Activated T-helper 2 cell treated with anti-CD3 and anti-CD28 coated beads, Interferon-gamma antibody, Interleukin-2, Interleukin-4, amounts not matched to agents 10 μg/mL and 5 μg/mL and 100 μg/mL, durations not matched to agents 14 hours and 24 hours and 36 hours (primary cell): ENCODE measurements at regions of chr1 and their contacts with region 1.

Region 1: GRCh38 chr1:27603681-27604578 is at the start of gene AHDC1:
- DNase-seq: peak; percentile 87
- H3K4me3 Mint-ChIP-seq: peak within 1 kb of the TSS; percentile 94
- H3K27ac Mint-ChIP-seq: peak within 1 kb of the TSS; percentile 76
- H3K4me1 Mint-ChIP-seq: peaks cover 41% of the 10 kb centered on the region
- H3K27me3 Mint-ChIP-seq: peaks cover 2% of the 10 kb centered on the region
- total RNA-seq, gene AHDC1: 28.5 and 29.3 TPM in 2 replicates

Region 2: GRCh38 chr1:27300341-27301051 is 303.4 kb before region 1 on chr1:
- intact Hi-C with region 1: loop called (anchors 5 kb)
- DNase-seq: peak; percentile 63
- H3K4me3 Mint-ChIP-seq: no peak overlapping the region
- H3K27ac Mint-ChIP-seq: no peak overlapping the region
- H3K4me1 Mint-ChIP-seq: peaks cover 3% of the 10 kb centered on the region
- H3K27me3 Mint-ChIP-seq: no peaks in the 10 kb centered on the region

Region 3: GRCh38 chr1:27416387-27417111 is 187.4 kb before region 1 on chr1:
- intact Hi-C with region 1: loop called (anchors 1 kb)
- DNase-seq: peak; percentile 53
- H3K4me3 Mint-ChIP-seq: no peak overlapping the region
- H3K27ac Mint-ChIP-seq: peak overlapping the region; percentile 55
- H3K4me1 Mint-ChIP-seq: peaks cover 37% of the 10 kb centered on the region
- H3K27me3 Mint-ChIP-seq: no peaks in the 10 kb centered on the region

Region 4: GRCh38 chr1:27556781-27557595 is 46.9 kb before region 1 on chr1:
- intact Hi-C with region 1: loop called (anchors 1 kb)
- DNase-seq: peak; percentile 71
- H3K4me3 Mint-ChIP-seq: no peak overlapping the region
- H3K27ac Mint-ChIP-seq: peak overlapping the region; percentile 76
- H3K4me1 Mint-ChIP-seq: peaks cover 24% of the 10 kb centered on the region
- H3K27me3 Mint-ChIP-seq: no peaks in the 10 kb centered on the region

Region 5: DNA sequence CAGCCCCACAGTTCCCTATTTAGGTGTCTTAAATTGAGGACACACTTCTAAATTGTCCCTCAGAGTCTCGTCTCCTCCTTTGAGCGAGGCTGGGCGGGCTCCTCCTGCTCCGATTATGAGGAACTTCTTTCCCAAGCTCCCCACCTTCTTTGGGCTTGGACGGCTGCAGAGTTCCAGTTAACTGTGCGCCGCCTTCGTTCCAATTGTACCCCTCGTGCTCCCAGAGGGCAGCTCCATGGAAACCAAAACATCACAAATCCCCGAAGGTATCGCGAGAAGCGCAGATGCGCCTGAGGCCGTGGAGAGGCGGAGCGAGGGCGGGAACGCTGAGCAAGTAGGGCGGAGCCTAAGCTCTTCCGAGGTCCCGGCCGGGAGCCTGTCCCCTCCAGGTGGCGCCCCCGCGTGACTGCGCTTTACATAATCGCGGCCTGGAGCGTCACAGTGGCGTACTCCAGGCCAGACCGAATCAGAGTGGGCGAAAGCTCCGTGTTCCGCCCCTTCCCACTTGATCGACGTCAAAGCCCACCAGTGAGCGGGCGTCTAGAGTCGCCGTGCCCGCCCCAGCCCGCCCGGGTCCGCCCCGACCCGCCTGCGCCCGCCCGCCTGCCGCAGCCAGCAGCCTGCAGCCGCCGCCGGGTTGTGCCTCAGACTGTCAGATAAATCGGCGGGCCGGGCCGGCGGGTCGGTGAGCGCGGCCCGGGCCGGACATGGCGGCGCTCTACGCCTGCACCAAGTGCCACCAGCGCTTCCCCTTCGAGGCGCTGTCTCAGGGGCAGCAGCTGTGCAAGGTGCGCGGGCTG is 121.6 kb after region 1 on chr1 and contains the start of gene FAM76A:
- intact Hi-C with region 1: loop called (anchors 5 kb)
- DNase-seq: peak; percentile 99
- H3K4me3 Mint-ChIP-seq: peak within 1 kb of the TSS; percentile 85
- H3K27ac Mint-ChIP-seq: peak within 1 kb of the TSS; percentile 99
- H3K4me1 Mint-ChIP-seq: peaks cover 14% of the 10 kb centered on the region
- H3K27me3 Mint-ChIP-seq: no peaks in the 10 kb centered on the region
- total RNA-seq, gene FAM76A: 13.6 and 14.0 TPM in 2 replicates